ENCODE measurements at regions of chr2 and their contacts with region 1.

Region 1: GRCh38 chr2:72150157-72150865 is 2.6 kb upstream of the CYP26B1 start:
- DNase-seq: peak; percentile 28 to 97 (median 86)

Region 2: DNA sequence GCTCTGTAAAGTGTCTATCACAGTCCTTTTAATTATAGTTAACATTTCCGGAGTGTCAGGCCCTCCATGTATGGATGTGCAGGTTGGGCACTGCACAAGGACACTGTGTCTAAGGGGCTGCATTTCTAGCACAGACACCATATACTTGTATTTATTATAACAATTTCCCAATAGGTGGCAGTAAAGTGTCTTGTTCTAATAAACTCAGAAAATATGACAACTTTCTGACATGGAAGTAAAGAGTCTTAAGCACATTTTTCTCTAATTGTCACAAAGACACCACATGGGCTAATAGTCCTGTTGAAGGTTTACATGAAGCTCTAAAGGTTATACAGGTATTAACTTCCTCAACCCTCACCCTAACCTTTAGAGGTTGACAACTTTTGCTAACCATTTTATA is 540.4 kb before region 1 on chr2:
- intact Hi-C with region 1: loop called (anchors 10 kb)
- DNase-seq: peak in 4 of 10 donors; percentile 1 to 35 (median 4)

Region 3: GRCh38 chr2:71798266-71799012 is 351.9 kb before region 1 on chr2:
- intact Hi-C with region 1: loop called (anchors 2 kb)
- DNase-seq: peak in 4 of 10 donors; percentile 19 to 83 (median 36)

Region 4: GRCh38 chr2:71923887-71924533 is 226.3 kb before region 1 on chr2:
- intact Hi-C with region 1: loop called (anchors 1 kb)
- DNase-seq: peak in 7 of 10 donors; percentile 52 to 92 (median 69)

Region 5: GRCh38 chr2:72605836-72606442 is 455.6 kb after region 1 on chr2:
- intact Hi-C with region 1: loop called (anchors 10 kb)
- DNase-seq: no peak

Measured in posterior cingulate gyrus (tissue), 11 donors.